Motor neuron (in vitro differentiated cells): ENCODE measurements at regions of chr18 and their contacts with region 1.

Region 1: DNA sequence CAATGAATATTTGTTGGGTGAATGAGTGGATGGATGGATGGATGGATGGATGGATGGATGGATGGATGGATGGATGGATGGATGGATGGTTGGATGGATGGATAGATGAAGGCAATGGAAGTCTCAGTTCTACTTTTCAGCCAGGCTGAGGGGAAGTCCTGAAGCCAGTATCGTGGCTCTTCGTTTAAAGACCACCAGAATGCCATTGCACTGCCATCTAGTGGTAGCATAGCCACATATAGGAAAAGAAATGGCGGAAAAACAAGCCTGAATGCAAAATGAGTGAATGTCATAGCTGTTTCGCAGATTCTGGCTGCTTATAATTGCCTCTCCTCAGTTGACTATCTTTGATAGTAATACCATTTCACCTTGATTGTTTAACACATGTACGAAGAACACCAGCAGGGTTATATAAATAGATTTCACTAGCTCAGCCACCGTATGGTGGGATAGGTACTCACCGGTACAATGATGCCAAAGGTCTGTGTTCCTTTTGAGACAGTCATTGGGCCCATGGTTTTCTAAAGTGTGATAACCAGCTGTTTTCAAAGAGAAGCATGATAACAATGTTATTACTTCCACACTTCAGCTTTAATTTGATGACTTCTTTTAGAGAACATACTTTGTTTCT is 62.3 kb upstream of the GREB1L start:
- ATAC-seq: peak; percentile 36 to 87 (median 68)
- H3K4me3 ChIP-seq: no peak overlapping the region
- H3K27ac ChIP-seq: no peak overlapping the region
- H3K4me1 ChIP-seq: no peaks in the 10 kb centered on the region

Region 2: GRCh38 chr18:21004726-21005125 is 175.0 kb before region 1 on chr18:
- in situ Hi-C with region 1: loop called in 1 of 9 experiments (anchors 10 kb)
- ATAC-seq: peak in 5 of 8 experiments; percentile 16 to 97 (median 38)
- H3K4me3 ChIP-seq: no peak overlapping the region
- H3K27ac ChIP-seq: no peak overlapping the region
- H3K4me1 ChIP-seq: no peaks in the 10 kb centered on the region

Region 3: GRCh38 chr18:21111341-21112139 is 68.2 kb before region 1 on chr18 and contains the start of gene ROCK1:
- in situ Hi-C with region 1: loop called in 1 of 9 experiments (anchors 10 kb)
- ATAC-seq: peak; percentile 86 to 96 (median 95)
- H3K4me3 ChIP-seq: peak within 1 kb of the TSS; percentile 75 to 98 (median 89)
- H3K27ac ChIP-seq: peak within 1 kb of the TSS; percentile 87 to 88
- H3K4me1 ChIP-seq: peaks cover 15 to 19% of the 10 kb centered on the region in 2 donors
- total RNA-seq, gene ROCK1: 21.1 to 48.3 (median 25.9) TPM

Region 4: GRCh38 chr18:21303913-21304312 is 124.2 kb after region 1 on chr18:
- in situ Hi-C with region 1: no loop called
- ATAC-seq: no peak
- H3K4me3 ChIP-seq: no peak overlapping the region
- H3K27ac ChIP-seq: no peak overlapping the region
- H3K4me1 ChIP-seq: peaks cover 15% of the 10 kb centered on the region in 2 donors

Region 5: GRCh38 chr18:21955757-21956652 is 776.3 kb after region 1 on chr18:
- in situ Hi-C with region 1: loop called in 1 of 9 experiments (anchors 25 kb)
- ATAC-seq: peak; percentile 40 to 74 (median 54)
- H3K4me3 ChIP-seq: no peak overlapping the region
- H3K27ac ChIP-seq: no peak overlapping the region
- H3K4me1 ChIP-seq: no peaks in the 10 kb centered on the region

Region 6: DNA sequence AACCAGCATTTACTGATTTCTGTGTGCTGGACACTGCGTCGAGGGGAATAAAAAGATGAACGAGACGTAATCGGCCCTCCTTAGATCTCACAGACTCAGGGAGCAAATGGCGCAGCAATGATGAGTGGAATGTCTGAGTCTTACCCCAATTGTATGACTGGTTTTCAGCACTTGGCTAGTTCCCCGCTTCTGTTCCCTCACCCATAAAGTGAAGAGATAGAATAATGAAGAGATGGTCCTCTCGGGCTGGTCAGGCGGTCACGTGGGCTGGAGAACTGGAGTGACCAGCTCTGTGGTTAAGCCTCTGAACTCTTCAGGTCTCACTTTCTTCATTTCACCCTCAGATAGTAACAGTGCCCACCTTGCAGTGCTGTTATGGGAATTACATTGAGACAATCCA is 972.4 kb after region 1 on chr18:
- in situ Hi-C with region 1: no loop called
- ATAC-seq: no peak
- H3K4me3 ChIP-seq: no peak overlapping the region
- H3K27ac ChIP-seq: no peak overlapping the region
- H3K4me1 ChIP-seq: no peaks in the 10 kb centered on the region